Psoas muscle (tissue), 8 donors: ENCODE measurements at regions of chr1 and their contacts with region 1.

Region 1: DNA sequence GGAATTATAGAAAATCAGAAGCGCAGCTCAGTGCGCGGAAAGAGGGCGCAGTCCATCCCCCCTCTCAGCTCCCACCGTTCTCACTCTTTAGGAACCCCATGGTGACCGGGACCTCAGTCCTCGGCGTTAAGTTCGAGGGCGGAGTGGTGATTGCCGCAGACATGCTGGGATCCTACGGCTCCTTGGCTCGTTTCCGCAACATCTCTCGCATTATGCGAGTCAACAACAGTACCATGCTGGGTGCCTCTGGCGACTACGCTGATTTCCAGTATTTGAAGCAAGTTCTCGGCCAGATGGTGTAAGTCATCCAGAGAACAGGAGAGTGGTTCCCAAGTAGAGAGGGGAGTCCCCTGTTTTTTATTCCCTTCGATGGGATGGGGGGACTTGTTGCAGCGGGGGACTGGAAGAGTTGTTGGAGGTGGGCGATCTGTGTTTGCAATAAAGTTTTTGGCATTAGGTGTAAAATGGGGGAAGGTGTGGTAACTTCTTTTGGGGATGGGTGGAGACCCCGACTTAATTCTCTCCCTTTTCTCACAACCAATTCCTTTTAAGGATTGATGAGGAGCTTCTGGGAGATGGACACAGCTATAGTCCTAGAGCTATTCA is 620 bp downstream of the PSMB4 start:
- DNase-seq: peak in 1 of 2 donors; percentile 54
- ATAC-seq: peak; percentile 30 to 60 (median 44)
- H3K4me3 ChIP-seq: peak overlapping the region; percentile 91
- H3K27ac ChIP-seq: peak overlapping the region; percentile 98
- H3K4me1 ChIP-seq: peaks cover 11% of the 10 kb centered on the region
- H3K27me3 ChIP-seq: no peaks in the 10 kb centered on the region
- CTCF ChIP-seq: no peak

Region 2: GRCh38 chr1:151156515-151156819 is 243.5 kb before region 1 on chr1 and contains the start of gene TNFAIP8L2:
- intact Hi-C with region 1: no loop called
- DNase-seq: peak in 1 of 2 donors; percentile 75
- ATAC-seq: peak in 2 of 4 donors; percentile 26 to 33
- H3K4me3 ChIP-seq: peak within 1 kb of the TSS; percentile 37
- H3K27ac ChIP-seq: peak within 1 kb of the TSS; percentile 43
- H3K4me1 ChIP-seq: no peaks in the 10 kb centered on the region
- H3K27me3 ChIP-seq: no peaks in the 10 kb centered on the region
- CTCF ChIP-seq: no peak
- total RNA-seq, gene TNFAIP8L2: 0.56 to 1.3 (median 0.74) TPM

Region 3: DNA sequence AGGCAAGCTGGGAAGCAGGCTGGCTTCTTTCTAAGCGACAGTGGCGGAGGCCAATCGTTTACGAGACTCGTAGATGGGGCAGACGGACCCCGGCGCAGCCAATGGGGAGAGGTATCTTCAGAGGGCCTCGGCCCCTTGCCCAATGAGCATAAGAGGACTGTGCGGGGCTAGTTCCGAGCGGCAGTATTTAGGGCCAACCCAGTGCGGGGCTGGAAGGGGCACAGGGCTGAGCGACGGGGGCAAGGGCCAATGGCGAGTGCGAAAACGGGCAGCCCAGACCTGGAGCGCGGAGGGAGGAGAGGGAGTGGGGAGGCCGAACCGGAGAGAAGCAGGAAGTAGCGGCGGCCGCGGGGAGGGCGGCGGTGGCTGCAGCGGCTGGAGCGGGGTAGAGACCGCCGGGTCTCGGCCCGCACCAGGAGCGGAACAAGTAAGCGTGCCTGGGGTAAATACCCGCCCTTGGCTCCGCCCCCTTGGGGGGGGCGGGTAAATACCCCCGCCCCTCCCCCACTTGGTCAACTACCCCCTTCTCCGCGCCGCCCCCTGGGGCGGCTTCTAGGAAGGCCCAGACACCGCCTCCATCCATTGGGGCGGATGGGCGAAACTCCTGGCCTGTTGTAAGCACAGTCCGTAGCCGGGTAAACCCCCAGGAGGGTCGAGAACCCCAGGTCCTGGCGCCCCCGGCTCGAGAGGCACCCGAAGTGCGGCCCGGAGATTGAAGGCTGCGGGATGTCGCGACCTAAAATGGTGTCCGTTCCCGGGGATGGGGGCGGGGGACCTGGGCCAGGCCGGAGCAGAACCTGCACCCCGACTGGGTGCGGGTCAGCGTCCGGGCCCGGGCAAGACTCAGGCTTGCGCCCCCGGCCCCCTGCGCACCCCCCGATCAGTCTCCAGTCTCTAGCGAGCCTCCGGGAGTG is 117.8 kb before region 1 on chr1 and contains the start of gene ZNF687:
- intact Hi-C with region 1: loop called in 1 of 2 experiments (anchors 5 kb)
- DNase-seq: peak; percentile 100
- ATAC-seq: peak; percentile 87 to 92 (median 88)
- H3K4me3 ChIP-seq: peak within 1 kb of the TSS; percentile 85
- H3K27ac ChIP-seq: peak within 1 kb of the TSS; percentile 97
- H3K4me1 ChIP-seq: peaks cover 21% of the 10 kb centered on the region
- H3K27me3 ChIP-seq: no peaks in the 10 kb centered on the region
- CTCF ChIP-seq: no peak
- total RNA-seq, gene ZNF687: 10.6 to 14.8 (median 13.1) TPM

Region 4: GRCh38 chr1:151294742-151295462 is 105.1 kb before region 1 on chr1:
- intact Hi-C with region 1: loop called (anchors 2 to 10 kb)
- DNase-seq: no peak
- ATAC-seq: no peak
- H3K4me3 ChIP-seq: no peak overlapping the region
- H3K27ac ChIP-seq: no peak overlapping the region
- H3K4me1 ChIP-seq: no peaks in the 10 kb centered on the region
- H3K27me3 ChIP-seq: no peaks in the 10 kb centered on the region
- CTCF ChIP-seq: no peak

Region 5: DNA sequence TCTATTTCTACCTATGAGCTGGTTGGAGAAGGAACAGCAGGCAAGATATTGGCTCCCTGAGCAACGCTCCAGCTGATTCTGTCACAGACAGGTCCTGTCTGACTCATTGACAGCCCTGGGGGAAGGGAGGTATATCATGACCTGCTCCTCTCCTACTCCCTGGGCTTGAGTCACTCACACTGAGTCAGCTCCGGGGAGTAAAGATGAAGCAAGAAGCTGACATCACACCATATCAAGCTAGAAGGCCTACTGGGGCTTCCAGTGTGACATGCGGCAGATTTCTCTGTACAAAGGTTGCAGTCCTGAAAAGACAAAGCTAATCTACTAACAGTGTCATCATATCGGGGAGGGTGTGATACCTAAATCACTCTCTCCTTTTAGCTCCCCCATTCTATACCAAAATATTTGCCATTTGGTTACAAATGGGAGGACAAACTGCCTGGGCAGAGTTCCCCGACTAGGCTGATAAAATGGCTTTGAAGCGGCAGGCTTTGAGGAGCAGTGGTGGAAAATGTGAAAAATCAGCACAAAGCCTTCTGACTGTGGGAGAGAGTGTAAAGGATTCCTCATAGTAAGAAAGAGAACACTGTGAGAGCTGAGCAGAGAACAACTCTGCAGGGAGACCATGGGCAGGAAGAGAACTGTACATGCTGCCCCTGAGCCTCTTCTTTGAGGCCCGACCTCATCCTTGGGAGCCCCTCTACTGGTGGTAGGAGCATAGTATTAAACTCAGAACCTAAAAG is 88.2 kb before region 1 on chr1:
- intact Hi-C with region 1: loop called in 1 of 2 experiments (anchors 10 kb)
- DNase-seq: peak; percentile 84 to 89
- ATAC-seq: peak; percentile 93 to 97 (median 96)
- H3K4me3 ChIP-seq: peak overlapping the region; percentile 27
- H3K27ac ChIP-seq: peak overlapping the region; percentile 97
- H3K4me1 ChIP-seq: peaks cover 57% of the 10 kb centered on the region
- H3K27me3 ChIP-seq: no peaks in the 10 kb centered on the region
- CTCF ChIP-seq: no peak

Region 6: GRCh38 chr1:151346769-151347522 is 53.0 kb before region 1 on chr1 and contains the start of gene RFX5:
- intact Hi-C with region 1: loop called (anchors 2 to 10 kb)
- DNase-seq: peak; percentile 92 to 96
- ATAC-seq: peak; percentile 98 to 99 (median 99)
- H3K4me3 ChIP-seq: peak within 1 kb of the TSS; percentile 88
- H3K27ac ChIP-seq: peak within 1 kb of the TSS; percentile 91
- H3K4me1 ChIP-seq: peaks cover 16% of the 10 kb centered on the region
- H3K27me3 ChIP-seq: no peaks in the 10 kb centered on the region
- CTCF ChIP-seq: no peak
- total RNA-seq, gene RFX5: 16.9 to 38.7 (median 21.6) TPM